GM10248 (cell line): ENCODE measurements at regions of chr3 and their contacts with region 1.

Region 1: GRCh38 chr3:16534640-16535262 is 21.3 kb upstream of the RFTN1 start:
- DNase-seq: no peak
- CTCF ChIP-seq: no peak

Region 2: GRCh38 chr3:16322189-16322588 is 212.6 kb before region 1 on chr3:
- CTCF ChIA-PET with region 1: no interaction called
- POLR2A ChIA-PET with region 1: no interaction called
- DNase-seq: peak; percentile 11
- CTCF ChIP-seq: no peak

Region 3: GRCh38 chr3:16550676-16551341 is 16.1 kb after region 1 on chr3:
- CTCF ChIA-PET with region 1: interaction called, 17 read pairs
- POLR2A ChIA-PET with region 1: no interaction called
- DNase-seq: peak; percentile 65
- CTCF ChIP-seq: peak; percentile 90